Adrenal gland (tissue), 19 donors: ENCODE measurements at regions of chr19 and their contacts with region 1.

Region 1: GRCh38 chr19:32224371-32225244 is 120.8 kb upstream of the ZNF507 start:
- DNase-seq: peak; percentile 30 to 67 (median 61)
- H3K4me3 ChIP-seq: peak overlapping the region in 1 of 4 donors; percentile 34
- H3K27ac ChIP-seq: no peak overlapping the region
- H3K4me1 ChIP-seq: no peaks in the 10 kb centered on the region
- H3K27me3 ChIP-seq: peaks cover 18% of the 10 kb centered on the region
- CTCF ChIP-seq: peak; percentile 76 to 100 (median 94)
- POLR2A ChIP-seq: no peak

Region 2: DNA sequence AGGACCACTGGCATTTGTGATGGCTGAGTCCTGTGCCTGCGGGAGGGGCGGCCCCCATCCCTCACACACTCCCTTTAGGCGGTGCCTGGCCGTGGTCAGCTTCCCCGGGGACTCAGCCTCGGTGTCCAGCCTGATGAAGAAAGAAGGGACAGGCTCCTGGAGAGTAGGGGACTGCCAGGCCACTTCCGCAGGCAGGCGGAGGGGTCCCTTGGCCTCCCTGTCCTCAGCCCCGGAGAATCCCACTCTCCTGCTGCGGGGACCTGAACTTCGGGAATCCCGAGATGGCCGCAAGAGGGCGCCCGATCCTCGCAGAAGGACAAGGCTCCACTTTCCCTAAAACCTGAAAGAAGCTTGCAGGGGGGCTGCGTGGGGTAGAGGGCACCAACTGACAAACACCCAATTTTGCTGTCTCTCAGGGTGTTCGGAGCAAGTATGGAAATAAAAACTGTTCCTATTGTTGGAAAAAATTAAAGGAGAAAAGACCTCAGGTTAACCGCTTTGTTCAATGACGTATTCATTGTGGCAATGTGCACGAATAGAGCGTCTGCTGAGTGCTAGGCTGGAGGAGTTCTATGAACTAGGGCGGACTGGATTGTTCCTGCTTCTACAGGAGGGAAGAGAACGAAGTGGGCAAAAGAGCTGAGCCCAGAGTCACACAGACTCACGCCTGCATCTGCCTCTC is 1555.1 kb before region 1 on chr19:
- intact Hi-C with region 1: loop called in 1 of 2 experiments (anchors 5 kb)
- DNase-seq: peak; percentile 48 to 81 (median 76)
- H3K4me3 ChIP-seq: no peak overlapping the region
- H3K27ac ChIP-seq: no peak overlapping the region
- H3K4me1 ChIP-seq: peaks cover 0 to 14% of the 10 kb centered on the region in 2 donors
- H3K27me3 ChIP-seq: no peaks in the 10 kb centered on the region
- CTCF ChIP-seq: peak; percentile 52 to 89 (median 68)
- POLR2A ChIP-seq: no peak

Region 3: DNA sequence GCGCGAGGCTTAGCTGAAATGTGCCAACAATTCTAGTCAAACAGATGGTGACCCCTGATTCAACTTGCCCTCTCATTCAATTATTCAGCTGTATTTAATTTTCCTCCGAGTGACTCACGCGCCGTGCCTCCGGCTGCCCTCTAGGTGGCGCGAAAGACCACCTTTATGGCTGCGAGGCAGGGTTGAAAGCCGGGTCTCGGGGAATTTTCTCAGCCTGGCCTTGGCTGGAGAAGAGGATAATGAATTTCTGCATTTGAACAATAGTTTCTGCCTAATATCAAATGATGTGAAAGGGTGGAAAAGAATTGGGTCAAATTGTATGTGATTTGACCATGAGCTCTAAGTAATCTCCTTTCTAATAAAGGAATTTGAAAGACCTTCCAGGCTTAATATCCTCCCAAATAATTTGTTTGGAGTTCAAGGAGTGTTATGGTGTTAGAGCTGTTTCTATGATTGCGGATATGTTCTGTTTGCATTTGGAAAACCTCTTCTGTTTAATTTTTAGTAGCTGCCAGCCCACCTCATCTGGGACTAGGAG is 1541.5 kb before region 1 on chr19:
- intact Hi-C with region 1: loop called (anchors 5 to 10 kb)
- DNase-seq: peak; percentile 78 to 92 (median 83)
- H3K4me3 ChIP-seq: no peak overlapping the region
- H3K27ac ChIP-seq: no peak overlapping the region
- H3K4me1 ChIP-seq: peaks cover 0 to 8% of the 10 kb centered on the region in 2 donors
- H3K27me3 ChIP-seq: no peaks in the 10 kb centered on the region
- CTCF ChIP-seq: peak; percentile 87 to 94 (median 93)
- POLR2A ChIP-seq: no peak

Region 4: GRCh38 chr19:30784850-30785457 is 1439.7 kb before region 1 on chr19:
- intact Hi-C with region 1: loop called in 1 of 2 experiments (anchors 5 kb)
- DNase-seq: peak; percentile 46 to 77 (median 58)
- H3K4me3 ChIP-seq: no peak overlapping the region
- H3K27ac ChIP-seq: no peak overlapping the region
- H3K4me1 ChIP-seq: no peaks in the 10 kb centered on the region
- H3K27me3 ChIP-seq: no peaks in the 10 kb centered on the region
- CTCF ChIP-seq: peak; percentile 55 to 67 (median 60)
- POLR2A ChIP-seq: no peak

Region 5: DNA sequence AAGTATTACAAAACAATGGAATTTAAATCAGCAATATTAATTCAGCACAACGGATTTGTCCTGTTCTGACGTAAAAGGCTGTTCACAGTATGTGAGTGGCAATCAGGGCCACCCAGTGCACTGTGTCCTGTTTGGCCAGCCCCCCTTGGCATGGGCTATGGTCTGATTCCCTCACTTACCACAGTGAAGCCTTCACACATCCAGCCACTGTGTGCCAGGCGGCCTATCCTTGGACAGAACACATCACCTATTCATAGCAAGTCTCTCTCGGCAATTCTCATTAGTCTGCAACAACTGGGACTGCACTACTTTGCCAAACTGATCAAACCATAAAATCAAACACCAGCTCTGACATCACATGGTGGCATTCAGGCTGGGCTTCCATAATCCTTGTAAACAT is 653.9 kb before region 1 on chr19:
- intact Hi-C with region 1: no loop called
- DNase-seq: no peak
- H3K4me3 ChIP-seq: no peak overlapping the region
- H3K27ac ChIP-seq: no peak overlapping the region
- H3K4me1 ChIP-seq: no peaks in the 10 kb centered on the region
- H3K27me3 ChIP-seq: peaks cover 9% of the 10 kb centered on the region
- CTCF ChIP-seq: no peak
- POLR2A ChIP-seq: no peak

Region 6: GRCh38 chr19:31676271-31677004 is 548.2 kb before region 1 on chr19:
- intact Hi-C with region 1: loop called in 1 of 2 experiments (anchors 10 kb)
- DNase-seq: peak in 6 of 7 donors; percentile 23 to 55 (median 39)
- H3K4me3 ChIP-seq: no peak overlapping the region
- H3K27ac ChIP-seq: no peak overlapping the region
- H3K4me1 ChIP-seq: no peaks in the 10 kb centered on the region
- H3K27me3 ChIP-seq: no peaks in the 10 kb centered on the region
- CTCF ChIP-seq: peak in 4 of 6 experiments; percentile 43 to 59 (median 49)
- POLR2A ChIP-seq: no peak

Region 7: GRCh38 chr19:32104153-32104849 is 120.3 kb before region 1 on chr19:
- intact Hi-C with region 1: no loop called
- DNase-seq: peak in 1 of 7 donors; percentile 4
- H3K4me3 ChIP-seq: no peak overlapping the region
- H3K27ac ChIP-seq: no peak overlapping the region
- H3K4me1 ChIP-seq: peaks cover 0 to 4% of the 10 kb centered on the region in 2 donors
- H3K27me3 ChIP-seq: peaks cover 28% of the 10 kb centered on the region
- CTCF ChIP-seq: peak in 2 of 6 experiments; percentile 7 to 17
- POLR2A ChIP-seq: no peak